ENCODE measurements at regions of chr14 and their contacts with region 1.

Region 1: GRCh38 chr14:37874429-37875191 is 279.2 kb downstream of the TTC6 start:
- H3K4me3 ChIP-seq: no peak overlapping the region
- H3K27ac ChIP-seq: no peak overlapping the region
- H3K4me1 ChIP-seq: no peaks in the 10 kb centered on the region
- CTCF ChIP-seq: peak; percentile 78

Region 2: DNA sequence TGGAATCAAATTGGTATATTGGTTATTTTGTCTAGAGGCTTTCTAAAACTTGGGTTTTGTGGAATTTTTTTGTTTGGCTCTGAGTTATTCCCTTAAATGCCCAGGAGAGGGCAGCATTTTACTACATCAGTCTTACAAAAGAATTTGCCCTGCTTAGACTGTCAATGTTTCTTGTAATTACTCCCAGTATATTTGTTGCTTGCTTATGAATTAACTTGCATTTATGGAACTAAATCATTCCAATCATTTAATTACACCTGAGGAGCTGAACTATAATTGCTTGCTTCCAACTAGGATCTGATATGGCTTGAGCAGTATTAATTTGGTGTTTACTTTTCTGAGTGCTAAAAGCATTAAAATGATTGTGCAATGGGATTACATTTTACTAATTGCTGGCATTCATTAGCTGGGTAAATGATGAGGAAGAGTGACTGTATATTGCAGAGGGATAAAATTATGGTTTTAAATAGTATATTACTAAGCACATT is 628.1 kb before region 1 on chr14:
- CTCF ChIA-PET with region 1: interaction called, 35 read pairs
- POLR2A ChIA-PET with region 1: no interaction called
- H3K4me3 ChIP-seq: no peak overlapping the region
- H3K27ac ChIP-seq: no peak overlapping the region
- H3K4me1 ChIP-seq: no peaks in the 10 kb centered on the region
- CTCF ChIP-seq: 0 out of 2 replicates have a peak, but pooled peaks have one; percentile 12

Region 3: DNA sequence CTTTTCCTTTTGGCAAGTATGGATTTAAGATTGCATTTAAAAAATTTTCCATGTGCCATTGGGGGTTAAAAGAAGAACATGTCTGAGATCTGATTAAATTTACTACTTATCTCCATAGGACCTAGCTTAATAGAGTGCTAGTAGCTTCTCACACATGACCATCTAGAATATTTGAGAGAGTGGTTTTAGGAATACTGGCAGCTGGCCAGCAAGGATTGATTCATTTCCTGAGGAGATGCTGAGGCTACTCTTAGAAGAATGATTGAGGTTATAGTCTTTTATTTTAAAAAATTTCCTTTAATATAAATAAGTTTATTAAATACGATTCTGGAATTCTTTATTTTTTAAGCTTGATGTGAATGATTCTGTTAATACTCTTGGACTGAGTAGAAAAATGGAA is 620.7 kb before region 1 on chr14:
- CTCF ChIA-PET with region 1: interaction called, 12 read pairs
- POLR2A ChIA-PET with region 1: no interaction called
- H3K4me3 ChIP-seq: no peak overlapping the region
- H3K27ac ChIP-seq: no peak overlapping the region
- H3K4me1 ChIP-seq: no peaks in the 10 kb centered on the region
- CTCF ChIP-seq: no peak

Region 4: DNA sequence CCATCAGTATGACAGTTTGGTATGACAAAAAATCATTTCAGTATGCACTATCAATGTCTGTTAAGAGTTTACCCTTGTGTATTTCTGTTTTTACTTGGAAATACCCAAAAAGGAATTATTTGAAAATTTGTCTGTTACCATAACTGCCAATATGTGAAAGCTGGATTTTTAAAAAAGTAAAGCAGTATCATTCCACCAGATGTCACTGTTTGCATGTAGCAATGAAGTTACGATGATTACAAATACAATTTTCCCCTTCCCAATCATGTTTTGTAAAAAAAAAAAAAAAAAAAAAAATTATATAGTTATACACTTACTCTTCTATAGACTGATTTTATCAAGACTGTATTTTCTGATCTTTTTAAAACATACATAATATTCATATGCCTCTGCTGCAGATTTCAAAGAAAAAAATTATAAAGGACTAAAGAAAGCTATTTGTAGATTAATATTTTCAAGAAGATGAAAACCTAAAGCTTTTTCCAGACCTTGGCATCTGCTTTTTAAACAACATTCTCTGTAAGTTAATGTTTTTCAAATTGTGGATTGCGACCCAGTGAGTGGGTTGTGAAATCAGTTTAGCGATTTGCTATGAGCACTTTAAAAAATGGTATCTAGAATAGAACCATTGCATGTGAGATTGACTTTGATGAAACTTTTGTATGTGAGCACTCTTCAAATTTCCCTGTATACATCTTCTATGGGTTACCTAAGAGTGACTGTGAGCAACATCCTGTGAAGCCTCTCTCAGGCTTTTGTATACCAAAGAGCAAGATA is 165.0 kb before region 1 on chr14:
- CTCF ChIA-PET with region 1: interaction called, 46 read pairs
- POLR2A ChIA-PET with region 1: no interaction called
- H3K4me3 ChIP-seq: no peak overlapping the region
- H3K27ac ChIP-seq: no peak overlapping the region
- H3K4me1 ChIP-seq: no peaks in the 10 kb centered on the region
- CTCF ChIP-seq: no peak

Region 5: GRCh38 chr14:37890095-37890494 is 15.5 kb after region 1 on chr14:
- CTCF ChIA-PET with region 1: interaction called, 21 read pairs
- POLR2A ChIA-PET with region 1: no interaction called
- H3K4me3 ChIP-seq: no peak overlapping the region
- H3K27ac ChIP-seq: no peak overlapping the region
- H3K4me1 ChIP-seq: peaks cover 3% of the 10 kb centered on the region; the same call in 1 of the 2 replicates
- CTCF ChIP-seq: no peak

Region 6: DNA sequence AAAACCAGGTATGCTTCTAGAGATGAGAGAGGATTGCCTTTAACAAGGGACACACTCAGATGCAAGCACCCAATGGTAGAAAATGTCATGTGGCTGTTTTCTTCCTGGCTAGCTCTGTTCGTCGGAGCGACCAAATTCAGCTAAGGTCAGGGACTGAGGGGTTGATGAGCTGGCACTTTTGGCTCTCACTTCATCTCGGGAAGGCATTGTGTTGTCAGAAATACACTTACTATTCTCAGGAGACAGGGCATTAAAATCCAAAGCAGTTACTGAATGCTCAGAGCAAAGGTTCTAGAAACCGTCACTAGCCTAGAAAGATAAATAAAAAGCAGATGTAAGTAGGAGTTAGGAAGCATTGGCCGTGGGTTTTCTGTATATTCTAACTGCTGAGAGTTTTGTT is 57.4 kb after region 1 on chr14:
- CTCF ChIA-PET with region 1: no interaction called
- POLR2A ChIA-PET with region 1: no interaction called
- H3K4me3 ChIP-seq: no peak overlapping the region
- H3K27ac ChIP-seq: no peak overlapping the region
- H3K4me1 ChIP-seq: no peaks in the 10 kb centered on the region
- CTCF ChIP-seq: no peak